Posterior vena cava (tissue), 2 donors: ENCODE measurements at regions of chr20 and their contacts with region 1.

Region 1: GRCh38 chr20:23061734-23062561 is 12.5 kb upstream of the THBD start:
- DNase-seq: peak; percentile 86

Region 2: GRCh38 chr20:22729180-22729579 is 332.8 kb before region 1 on chr20:
- intact Hi-C with region 1: loop called in 1 of 2 experiments (anchors 10 kb)
- DNase-seq: no peak